ENCODE measurements at regions of chr13 and their contacts with region 1.

Region 1: DNA sequence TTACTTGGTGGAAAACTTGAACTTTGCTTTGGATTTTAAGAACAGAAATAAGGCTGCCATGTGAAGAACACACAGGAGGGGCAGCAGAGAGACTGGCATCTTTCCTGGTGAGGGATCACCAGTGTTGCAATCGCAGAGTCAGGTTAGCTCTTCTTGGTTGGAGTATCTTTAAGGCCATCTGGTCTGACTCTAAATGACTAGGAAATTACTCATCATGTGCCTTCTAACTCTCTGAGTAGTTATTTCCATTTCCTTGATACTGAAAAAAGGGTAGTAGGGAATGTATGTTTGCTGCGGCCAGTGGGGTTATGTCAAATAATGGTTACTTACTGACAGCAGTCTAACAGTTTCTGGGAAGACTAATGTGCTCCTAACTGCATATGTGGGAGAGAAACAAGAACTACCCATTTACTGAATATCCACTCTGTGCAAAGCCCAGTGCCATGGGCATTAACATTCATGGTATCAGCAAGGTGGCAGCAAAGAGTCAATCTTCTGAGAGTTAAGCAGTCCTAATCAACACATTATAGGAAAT is 122.1 kb downstream of the COG6 start:
- DNase-seq: peak in 7 of 9 donors; percentile 7 to 58 (median 48)
- ATAC-seq: peak; percentile 62
- H3K4me3 ChIP-seq: no peak overlapping the region
- H3K4me3 Mint-ChIP-seq: peak overlapping the region in 2 of 10 donors; percentile 6 to 18
- H3K27ac ChIP-seq: no peak overlapping the region
- H3K27ac Mint-ChIP-seq: peak overlapping the region in 8 of 9 donors; percentile 8 to 60 (median 18)
- H3K4me1 ChIP-seq: peaks cover 0 to 22% of the 10 kb centered on the region in 2 donors
- H3K4me1 Mint-ChIP-seq: peaks cover 12 to 40% (median 36%) of the 10 kb centered on the region in 7 donors
- H3K27me3 ChIP-seq: no peaks in the 10 kb centered on the region
- H3K27me3 Mint-ChIP-seq: no peaks in the 10 kb centered on the region

Region 2: DNA sequence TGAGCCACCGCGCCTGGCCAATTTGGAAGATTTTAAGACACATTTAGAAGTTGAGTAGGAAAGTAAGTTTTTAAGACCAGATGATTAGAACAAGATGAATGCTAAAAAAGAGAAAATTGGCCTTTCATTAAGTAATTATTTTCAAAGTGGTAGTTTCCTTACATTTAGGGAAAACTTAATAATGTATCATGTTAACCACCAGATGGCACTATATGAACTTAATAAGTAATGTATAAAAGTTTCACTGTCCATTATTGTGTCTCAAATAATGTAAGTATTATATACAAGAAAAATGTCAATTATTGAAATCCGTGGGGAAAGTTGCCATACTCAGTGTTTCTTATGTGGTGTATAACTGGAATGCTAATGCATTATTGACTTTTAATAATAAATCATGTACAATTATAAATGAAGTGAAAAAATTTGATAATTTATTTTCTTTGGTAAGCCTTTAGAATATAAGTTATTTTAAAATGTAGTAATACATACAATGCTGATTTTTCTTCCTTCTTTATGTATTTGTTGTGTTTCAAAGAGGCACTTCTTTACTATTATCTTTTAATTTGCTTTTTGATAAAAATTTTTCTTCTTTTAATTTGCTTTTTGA is 93.0 kb before region 1 on chr13:
- CTCF ChIA-PET with region 1: no interaction called
- POLR2A ChIA-PET with region 1: no interaction called
- intact Hi-C with region 1: loop called (anchors 1 to 2 kb)
- DNase-seq: peak in 6 of 9 donors; percentile 6 to 44 (median 34)
- ATAC-seq: peak; percentile 53
- H3K4me3 ChIP-seq: no peak overlapping the region
- H3K4me3 Mint-ChIP-seq: no peak overlapping the region
- H3K27ac ChIP-seq: no peak overlapping the region
- H3K27ac Mint-ChIP-seq: no peak overlapping the region
- H3K4me1 ChIP-seq: no peaks in the 10 kb centered on the region
- H3K4me1 Mint-ChIP-seq: peaks cover 0 to 20% (median 3%) of the 10 kb centered on the region in 7 donors
- H3K27me3 ChIP-seq: no peaks in the 10 kb centered on the region
- H3K27me3 Mint-ChIP-seq: no peaks in the 10 kb centered on the region

Region 3: DNA sequence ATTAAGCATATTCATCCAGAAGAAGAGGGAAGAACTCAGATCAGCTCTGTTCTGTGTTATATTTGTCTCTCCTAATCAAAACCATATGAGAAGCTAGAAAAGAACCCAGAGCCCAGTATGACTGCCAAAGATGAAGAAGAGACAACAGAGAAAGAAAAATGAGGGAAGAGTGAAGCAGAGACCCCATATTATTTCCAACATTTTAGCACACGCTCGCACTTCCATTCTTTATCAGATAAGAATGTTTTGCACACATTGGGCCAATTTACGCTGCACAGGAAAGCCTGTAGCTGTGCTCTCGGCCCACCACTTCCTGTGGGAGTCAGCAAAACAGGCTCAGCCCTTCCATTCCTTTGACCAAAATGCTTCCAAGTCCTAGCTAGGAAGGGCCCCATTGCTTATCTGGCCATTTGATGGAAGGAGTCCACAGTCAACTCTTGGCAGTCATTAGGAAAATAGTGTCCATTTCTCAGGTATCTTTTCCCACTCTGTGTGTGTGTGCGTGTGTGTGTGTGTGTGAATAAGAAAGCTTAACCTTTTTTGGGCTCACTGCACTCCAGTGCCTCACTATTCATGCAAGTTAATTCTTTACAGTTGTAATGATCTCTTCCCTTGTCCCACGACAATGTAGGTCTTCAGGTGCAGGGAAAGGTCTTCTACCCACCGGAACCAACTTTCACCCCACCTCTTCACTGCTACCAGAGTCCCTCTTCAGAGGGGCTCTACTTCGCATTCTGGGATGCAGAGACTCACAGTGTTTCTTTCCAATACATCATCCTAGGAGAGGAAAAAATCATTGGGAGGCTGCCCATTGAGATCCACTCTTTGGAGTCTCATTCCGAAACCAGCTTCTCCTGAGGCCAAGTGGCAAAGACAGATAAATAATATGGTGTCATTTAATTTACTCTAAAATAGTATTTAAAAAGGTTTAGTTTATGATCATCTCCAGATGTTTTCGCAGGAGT is 115.4 kb after region 1 on chr13:
- CTCF ChIA-PET with region 1: no interaction called
- POLR2A ChIA-PET with region 1: no interaction called
- intact Hi-C with region 1: loop called in 1 of 2 experiments (anchors 5 kb)
- DNase-seq: peak in 8 of 9 donors; percentile 13 to 59 (median 46)
- ATAC-seq: peak; percentile 60
- H3K4me3 ChIP-seq: peak overlapping the region; percentile 31
- H3K4me3 Mint-ChIP-seq: peak overlapping the region; percentile 58 to 82 (median 72)
- H3K27ac ChIP-seq: no peak overlapping the region
- H3K27ac Mint-ChIP-seq: peak overlapping the region; percentile 43 to 86 (median 79)
- H3K4me1 ChIP-seq: peaks cover 0 to 31% of the 10 kb centered on the region in 2 donors
- H3K4me1 Mint-ChIP-seq: peaks cover 20 to 51% (median 43%) of the 10 kb centered on the region in 7 donors
- H3K27me3 ChIP-seq: no peaks in the 10 kb centered on the region
- H3K27me3 Mint-ChIP-seq: peaks cover 0 to 8% (median 0%) of the 10 kb centered on the region in 5 donors

Region 4: DNA sequence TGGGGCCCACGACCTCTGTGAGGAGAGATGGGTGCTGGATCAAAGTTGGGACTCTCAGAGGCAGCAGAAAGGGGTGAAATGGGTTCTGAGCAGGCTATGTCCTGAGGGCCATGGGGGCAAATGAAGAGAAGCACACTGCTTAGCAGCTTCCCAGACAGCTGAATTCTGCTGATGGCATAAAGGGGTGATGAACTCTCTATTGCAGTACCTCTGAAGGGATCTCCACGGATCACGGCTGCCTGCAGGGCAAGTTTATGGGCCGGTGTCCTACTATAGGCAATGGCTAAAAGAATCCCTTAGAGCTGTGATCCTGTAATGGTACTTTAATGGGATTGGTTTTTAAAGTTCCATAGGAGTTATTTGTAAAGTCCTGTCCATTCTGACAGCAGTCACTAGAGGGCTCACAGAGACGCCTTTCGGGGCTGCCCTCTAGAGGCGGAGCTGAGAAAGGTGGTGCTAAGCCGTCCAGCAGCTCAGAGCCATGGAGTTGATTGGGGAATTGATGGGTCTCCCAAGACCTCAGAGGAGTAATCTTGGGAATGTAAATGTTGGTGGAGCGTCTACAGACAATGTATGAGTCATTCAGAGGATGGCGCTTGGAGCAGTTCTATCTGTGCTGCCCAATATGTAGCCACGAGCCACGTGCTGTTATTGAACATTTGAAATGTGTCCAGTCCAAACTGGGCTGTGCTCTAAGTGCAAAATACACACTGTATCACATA is 165.1 kb after region 1 on chr13:
- CTCF ChIA-PET with region 1: interaction called, 49 read pairs
- POLR2A ChIA-PET with region 1: interaction called, 3 read pairs
- intact Hi-C with region 1: loop called (anchors 1 to 5 kb)
- DNase-seq: peak; percentile 41 to 71 (median 63)
- ATAC-seq: peak; percentile 98
- H3K4me3 ChIP-seq: no peak overlapping the region
- H3K4me3 Mint-ChIP-seq: peak overlapping the region in 2 of 10 donors; percentile 2 to 71
- H3K27ac ChIP-seq: no peak overlapping the region
- H3K27ac Mint-ChIP-seq: peak overlapping the region in 3 of 9 donors; percentile 1 to 63 (median 8)
- H3K4me1 ChIP-seq: no peaks in the 10 kb centered on the region
- H3K4me1 Mint-ChIP-seq: peaks cover 4 to 16% (median 11%) of the 10 kb centered on the region in 7 donors
- H3K27me3 ChIP-seq: no peaks in the 10 kb centered on the region
- H3K27me3 Mint-ChIP-seq: peaks cover 0 to 3% (median 0%) of the 10 kb centered on the region in 5 donors

Region 5: GRCh38 chr13:40589285-40590109 is 811.9 kb after region 1 on chr13:
- CTCF ChIA-PET with region 1: no interaction called
- POLR2A ChIA-PET with region 1: no interaction called
- intact Hi-C with region 1: loop called in 1 of 2 experiments (anchors 10 kb)
- DNase-seq: no peak
- ATAC-seq: peak; percentile 88
- H3K4me3 ChIP-seq: no peak overlapping the region
- H3K4me3 Mint-ChIP-seq: peak overlapping the region; percentile 29 to 85 (median 77)
- H3K27ac ChIP-seq: peak overlapping the region; percentile 25
- H3K27ac Mint-ChIP-seq: peak overlapping the region; percentile 35 to 93 (median 91)
- H3K4me1 ChIP-seq: peaks cover 42 to 75% of the 10 kb centered on the region in 2 donors
- H3K4me1 Mint-ChIP-seq: peaks cover 65 to 100% (median 95%) of the 10 kb centered on the region in 7 donors
- H3K27me3 ChIP-seq: no peaks in the 10 kb centered on the region
- H3K27me3 Mint-ChIP-seq: no peaks in the 10 kb centered on the region

Region 6: GRCh38 chr13:40682449-40683240 is 905.1 kb after region 1 on chr13:
- CTCF ChIA-PET with region 1: interaction called, 31 read pairs
- POLR2A ChIA-PET with region 1: interaction called, 3 read pairs
- intact Hi-C with region 1: loop called (anchors 1 to 2 kb)
- DNase-seq: peak in 6 of 9 donors; percentile 32 to 60 (median 52)
- ATAC-seq: peak; percentile 52
- H3K4me3 ChIP-seq: no peak overlapping the region
- H3K4me3 Mint-ChIP-seq: peak overlapping the region in 5 of 10 donors; percentile 2 to 45 (median 18)
- H3K27ac ChIP-seq: no peak overlapping the region
- H3K27ac Mint-ChIP-seq: peak overlapping the region in 2 of 9 donors; percentile 37 to 45
- H3K4me1 ChIP-seq: peaks cover 0 to 6% of the 10 kb centered on the region in 2 donors
- H3K4me1 Mint-ChIP-seq: peaks cover 8 to 17% (median 14%) of the 10 kb centered on the region in 7 donors
- H3K27me3 ChIP-seq: no peaks in the 10 kb centered on the region
- H3K27me3 Mint-ChIP-seq: no peaks in the 10 kb centered on the region